ENCODE measurements at regions of chr14 and their contacts with region 1.

Region 1: DNA sequence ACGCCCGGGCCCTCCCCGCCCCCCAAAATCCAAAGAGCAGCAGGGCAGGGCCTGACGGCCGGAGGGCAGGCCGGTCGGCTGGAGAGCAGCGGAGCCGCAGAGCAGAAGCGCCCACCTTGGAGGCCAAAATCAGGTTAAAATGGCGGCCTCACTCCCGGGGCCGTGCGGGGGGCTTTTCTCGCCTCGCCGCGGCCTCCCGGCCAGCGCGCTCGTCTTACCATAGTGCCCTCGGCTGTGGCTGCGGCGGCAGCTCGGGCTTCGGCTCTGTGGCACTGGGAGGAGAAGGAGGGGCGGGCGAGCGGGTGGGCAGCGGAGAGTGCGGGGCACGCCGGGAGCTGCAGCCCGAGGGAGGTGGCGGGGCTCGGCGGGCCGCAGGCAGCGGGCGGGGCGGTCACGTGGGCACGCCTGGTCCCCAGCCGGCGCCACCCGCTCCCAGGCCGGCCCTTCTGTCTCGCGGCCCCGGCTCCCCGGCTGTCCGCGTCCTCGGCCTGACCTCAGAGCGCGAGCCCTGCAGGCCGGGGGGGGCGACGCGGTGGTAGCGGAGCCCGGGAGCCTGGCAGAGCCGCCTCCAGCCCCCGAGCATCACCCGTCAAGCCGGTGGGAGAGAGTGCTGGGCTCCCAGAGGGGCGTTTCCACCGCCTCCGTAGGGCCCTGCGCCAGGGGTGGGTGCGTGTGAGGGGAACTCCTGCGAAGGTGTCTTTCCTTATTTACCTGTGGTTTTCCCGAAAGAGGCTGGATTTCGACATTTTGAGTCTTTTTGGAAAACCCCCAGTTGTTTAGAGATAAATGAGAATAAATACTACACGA is at the start of gene CFL2:
- DNase-seq: peak in 1 of 2 experiments; percentile 62
- H3K4me3 ChIP-seq: peak within 1 kb of the TSS; percentile 82
- H3K27ac ChIP-seq: peak within 1 kb of the TSS; percentile 69
- H3K4me1 ChIP-seq: peaks cover 7% of the 10 kb centered on the region
- H3K27me3 ChIP-seq: no peaks in the 10 kb centered on the region
- CTCF ChIP-seq: no peak
- total RNA-seq, gene CFL2: 18.5 and 30.5 TPM in 2 replicates

Region 2: DNA sequence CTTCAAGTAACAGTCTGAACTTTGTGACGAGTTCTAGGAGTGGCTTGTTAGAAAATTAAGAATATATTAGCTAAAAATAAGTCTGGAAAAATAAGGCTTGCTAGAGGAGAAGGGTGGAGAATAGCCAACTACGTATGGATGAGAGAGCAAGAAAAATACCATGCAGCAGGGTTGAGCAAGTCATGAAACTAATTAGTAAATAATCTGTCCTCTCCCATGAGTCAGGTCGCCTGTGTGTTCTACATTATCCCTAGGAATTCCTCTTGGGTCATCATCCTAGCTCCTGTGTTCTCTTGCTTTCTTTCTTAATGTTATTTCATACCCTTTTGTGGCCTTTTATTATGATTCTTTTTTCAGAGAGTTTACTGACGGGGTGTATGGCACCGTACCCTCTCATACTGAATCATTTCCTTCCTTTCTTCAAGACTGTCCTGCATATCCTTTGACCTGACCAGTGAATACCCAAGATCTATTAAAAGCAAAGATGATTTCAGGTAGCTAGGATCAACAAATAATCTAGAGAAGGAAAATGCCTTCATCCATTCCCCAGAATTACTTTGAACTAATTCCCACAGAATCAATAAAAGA is 1953.0 kb before region 1 on chr14:
- CTCF ChIA-PET with region 1: no interaction called
- POLR2A ChIA-PET with region 1: no interaction called
- intact Hi-C with region 1: no loop called
- DNase-seq: no peak
- H3K4me3 ChIP-seq: no peak overlapping the region
- H3K27ac ChIP-seq: no peak overlapping the region
- H3K4me1 ChIP-seq: no peaks in the 10 kb centered on the region
- H3K27me3 ChIP-seq: no peaks in the 10 kb centered on the region
- CTCF ChIP-seq: no peak

Region 3: GRCh38 chr14:34678306-34678705 is 36.2 kb before region 1 on chr14:
- CTCF ChIA-PET with region 1: interaction called, 6 read pairs
- POLR2A ChIA-PET with region 1: interaction called, 4 read pairs
- intact Hi-C with region 1: loop called (anchors 5 kb)
- DNase-seq: no peak
- H3K4me3 ChIP-seq: no peak overlapping the region
- H3K27ac ChIP-seq: peak overlapping the region; percentile 58
- H3K4me1 ChIP-seq: peaks cover 18% of the 10 kb centered on the region
- H3K27me3 ChIP-seq: no peaks in the 10 kb centered on the region
- CTCF ChIP-seq: no peak

Region 4: GRCh38 chr14:34851395-34851794 is 136.9 kb after region 1 on chr14:
- CTCF ChIA-PET with region 1: no interaction called
- POLR2A ChIA-PET with region 1: no interaction called
- intact Hi-C with region 1: no loop called
- DNase-seq: no peak
- H3K4me3 ChIP-seq: no peak overlapping the region
- H3K27ac ChIP-seq: no peak overlapping the region
- H3K4me1 ChIP-seq: no peaks in the 10 kb centered on the region
- H3K27me3 ChIP-seq: no peaks in the 10 kb centered on the region
- CTCF ChIP-seq: no peak